Activated B cell treated with CpG ODN at 0.5 μM for 24 hours (primary cell): ENCODE measurements at regions of chr15 and their contacts with region 1.

Region 1: DNA sequence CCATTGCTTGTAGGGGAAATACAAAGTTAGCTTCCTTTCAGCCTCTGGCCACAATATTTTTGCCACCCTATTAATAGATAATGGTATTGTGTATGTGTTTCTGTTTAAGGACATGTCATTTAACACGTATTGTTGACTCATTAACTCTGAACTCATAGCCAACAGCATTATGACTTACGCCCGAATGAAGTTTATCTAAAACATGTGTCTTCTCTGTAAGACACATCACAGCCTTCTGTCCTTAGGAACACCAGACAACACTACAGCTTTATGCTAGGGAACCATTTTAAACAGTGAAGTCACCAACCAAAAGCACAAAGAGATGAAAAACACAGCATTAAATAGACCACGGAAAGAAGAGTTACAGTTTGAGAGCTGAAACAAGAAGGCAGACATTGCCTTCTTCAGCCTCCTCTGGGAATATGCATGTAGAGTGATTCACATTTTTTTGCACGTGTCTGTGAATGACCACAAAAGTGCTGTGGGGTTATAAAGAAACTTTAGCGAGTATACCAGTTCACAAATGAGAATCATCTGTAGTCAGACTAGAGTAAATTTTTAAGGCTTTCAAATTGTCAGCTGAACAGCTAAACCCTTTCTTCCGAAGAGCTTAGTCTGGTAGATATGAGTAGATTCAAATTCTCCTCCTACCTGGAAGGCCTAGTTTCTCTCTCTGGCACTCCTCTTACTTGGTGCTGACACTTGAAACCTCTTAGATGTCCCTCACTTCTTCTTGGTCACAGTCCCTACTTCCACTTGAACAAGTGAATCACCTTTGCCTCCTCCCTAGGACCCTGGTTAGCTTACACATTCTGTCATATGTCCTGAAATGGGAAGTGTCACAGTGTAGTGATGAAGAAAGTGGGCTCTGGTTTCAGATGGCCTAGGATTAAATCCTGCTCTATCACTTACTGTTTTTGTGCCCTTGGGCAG is 32.2 kb downstream of the MCTP2 start:
- DNase-seq: no peak
- ATAC-seq: peak; percentile 68
- H3K4me3 Mint-ChIP-seq: peak overlapping the region; percentile 45
- H3K27ac Mint-ChIP-seq: peak overlapping the region; percentile 87
- H3K4me1 Mint-ChIP-seq: peaks cover 77% of the 10 kb centered on the region
- H3K27me3 Mint-ChIP-seq: no peaks in the 10 kb centered on the region
- CTCF ChIP-seq: no peak

Region 2: GRCh38 chr15:94238539-94239118 is 25.0 kb before region 1 on chr15:
- CTCF ChIA-PET with region 1: interaction called, 3 read pairs
- POLR2A ChIA-PET with region 1: interaction called, 10 read pairs
- intact Hi-C with region 1: loop called (anchors 1 kb)
- DNase-seq: no peak
- ATAC-seq: peak; percentile 83
- H3K4me3 Mint-ChIP-seq: peak overlapping the region; percentile 52
- H3K27ac Mint-ChIP-seq: peak overlapping the region; percentile 86
- H3K4me1 Mint-ChIP-seq: peaks cover 80% of the 10 kb centered on the region
- H3K27me3 Mint-ChIP-seq: no peaks in the 10 kb centered on the region
- CTCF ChIP-seq: no peak

Region 3: GRCh38 chr15:94335616-94336015 is 72.0 kb after region 1 on chr15:
- CTCF ChIA-PET with region 1: no interaction called
- POLR2A ChIA-PET with region 1: no interaction called
- intact Hi-C with region 1: no loop called
- DNase-seq: no peak
- ATAC-seq: no peak
- H3K4me3 Mint-ChIP-seq: no peak overlapping the region
- H3K27ac Mint-ChIP-seq: no peak overlapping the region
- H3K4me1 Mint-ChIP-seq: no peaks in the 10 kb centered on the region
- H3K27me3 Mint-ChIP-seq: no peaks in the 10 kb centered on the region
- CTCF ChIP-seq: no peak